Activated CD4-positive, alpha-beta T cell treated with anti-CD3 and anti-CD28 coated beads for 36 hours (primary cell): ENCODE measurements at regions of chr19 and their contacts with region 1.

Region 1: DNA sequence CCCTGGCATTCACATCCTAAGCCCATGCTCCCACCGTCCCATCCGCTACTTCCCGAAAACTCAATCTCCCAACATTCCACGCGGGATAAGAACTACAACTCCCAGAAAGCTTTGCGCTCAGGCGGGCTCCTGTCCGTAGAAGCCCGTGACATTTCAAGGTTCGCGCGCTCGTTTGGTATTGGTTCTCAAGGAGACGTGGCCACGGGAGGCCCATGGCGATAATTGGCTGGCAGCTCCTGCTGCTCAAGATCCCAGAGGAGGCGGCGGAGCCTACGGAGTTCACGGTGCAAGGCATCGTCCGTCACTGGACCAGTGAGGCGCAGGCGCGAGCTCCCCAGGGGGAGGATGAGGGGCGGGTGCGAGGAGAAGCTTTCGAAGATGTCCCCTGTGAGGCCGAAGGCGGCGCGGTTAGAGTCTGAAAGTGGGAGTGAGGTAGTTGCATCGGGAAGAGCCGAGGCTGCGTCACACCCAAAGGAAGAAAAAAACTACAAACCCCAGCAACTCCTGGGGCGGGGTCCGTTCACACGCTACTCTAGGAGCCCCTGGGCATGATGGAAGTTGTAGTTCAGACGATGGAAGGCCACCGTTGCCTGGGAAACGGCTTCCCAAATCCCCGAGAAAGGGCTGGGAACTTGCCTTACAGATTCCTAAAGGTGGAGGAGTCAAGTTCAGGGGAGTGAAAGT is 1.2 kb upstream of the MAMSTR start:
- DNase-seq: peak; percentile 97
- ATAC-seq: peak; percentile 96
- H3K4me3 Mint-ChIP-seq: peak overlapping the region; percentile 80
- H3K27ac Mint-ChIP-seq: peak overlapping the region; percentile 97
- H3K4me1 Mint-ChIP-seq: peaks cover 14% of the 10 kb centered on the region
- H3K27me3 Mint-ChIP-seq: no peaks in the 10 kb centered on the region

Region 2: GRCh38 chr19:48618916-48619691 is 101.7 kb before region 1 on chr19 and contains the starts of genes RPL18 and SPHK2:
- CTCF ChIA-PET with region 1: no interaction called
- POLR2A ChIA-PET with region 1: no interaction called
- intact Hi-C with region 1: loop called in 1 of 2 experiments (anchors 1 kb)
- DNase-seq: peak; percentile 97
- ATAC-seq: peak; percentile 82
- H3K4me3 Mint-ChIP-seq: peak within 1 kb of the TSS; percentile 94
- H3K27ac Mint-ChIP-seq: peak within 1 kb of the TSS; percentile 97
- H3K4me1 Mint-ChIP-seq: peaks cover 48% of the 10 kb centered on the region
- H3K27me3 Mint-ChIP-seq: no peaks in the 10 kb centered on the region
- total RNA-seq, gene RPL18: 2,026 to 2,191 TPM
- total RNA-seq, gene SPHK2: 27.0 TPM

Region 3: DNA sequence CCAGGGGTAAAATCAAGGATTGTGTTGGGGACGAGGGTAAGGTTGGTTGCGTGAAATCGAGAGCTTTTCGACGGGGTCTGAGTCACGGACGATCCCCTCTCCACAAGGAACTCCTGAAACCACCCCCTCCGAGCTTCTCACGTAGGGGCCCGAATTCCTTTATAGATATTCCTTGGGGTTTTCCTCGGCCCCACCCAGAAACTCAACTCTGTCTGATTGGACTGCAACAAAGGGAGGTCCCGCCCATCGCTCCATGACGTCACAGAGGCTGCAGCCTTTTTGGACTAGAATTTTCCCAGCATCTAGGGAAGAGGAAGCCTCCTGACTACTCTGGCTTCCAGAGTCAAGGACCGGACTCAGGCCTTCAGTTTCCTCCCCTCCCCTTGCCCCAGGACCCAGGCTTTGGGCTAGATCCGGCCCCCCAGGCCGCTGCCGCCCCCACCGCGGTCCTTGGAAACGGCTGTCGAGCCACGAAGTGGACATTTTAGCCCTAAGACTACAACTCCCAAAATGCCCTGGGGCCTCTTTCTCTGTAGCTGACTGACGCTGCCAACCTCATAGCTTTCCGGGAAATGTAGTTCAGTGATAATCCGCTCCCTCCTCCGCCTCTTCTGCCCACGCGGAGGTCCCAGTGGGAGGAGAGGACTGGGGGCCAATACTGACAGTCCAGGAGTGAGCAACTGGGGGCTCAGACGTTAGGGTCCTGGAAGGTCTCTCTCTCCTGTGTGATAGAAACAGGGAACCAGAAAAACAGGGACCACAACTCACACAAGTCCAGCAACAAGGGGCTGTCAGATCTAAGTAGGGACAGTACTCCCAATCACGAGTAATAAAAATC is 26.2 kb after region 1 on chr19 and contains the start of gene IZUMO1:
- CTCF ChIA-PET with region 1: no interaction called
- POLR2A ChIA-PET with region 1: no interaction called
- intact Hi-C with region 1: loop called in 1 of 2 experiments (anchors 1 kb)
- DNase-seq: peak; percentile 77
- ATAC-seq: peak; percentile 86
- H3K4me3 Mint-ChIP-seq: peak within 1 kb of the TSS; percentile 10
- H3K27ac Mint-ChIP-seq: no peak within 1 kb of the TSS
- H3K4me1 Mint-ChIP-seq: peaks cover 16% of the 10 kb centered on the region
- H3K27me3 Mint-ChIP-seq: peaks cover 14% of the 10 kb centered on the region
- total RNA-seq, gene IZUMO1: not detected

Region 4: GRCh38 chr19:48933382-48933932 is 212.7 kb after region 1 on chr19 and contains the start of gene DHDH:
- CTCF ChIA-PET with region 1: no interaction called
- POLR2A ChIA-PET with region 1: no interaction called
- intact Hi-C with region 1: no loop called
- DNase-seq: peak; percentile 90
- ATAC-seq: peak; percentile 92
- H3K4me3 Mint-ChIP-seq: peak within 1 kb of the TSS; percentile 74
- H3K27ac Mint-ChIP-seq: peak within 1 kb of the TSS; percentile 48
- H3K4me1 Mint-ChIP-seq: peaks cover 10% of the 10 kb centered on the region
- H3K27me3 Mint-ChIP-seq: peaks cover 2% of the 10 kb centered on the region
- total RNA-seq, gene DHDH: 1.4 to 2.4 TPM